Activated CD4-positive, alpha-beta memory T cell treated with anti-CD3 and anti-CD28 coated beads, Interleukin-2, amount 10 ng/mL, durations not matched to agents 7 days and 5 days (primary cell): ENCODE measurements at regions of chr20 and their contacts with region 1.

Region 1: DNA sequence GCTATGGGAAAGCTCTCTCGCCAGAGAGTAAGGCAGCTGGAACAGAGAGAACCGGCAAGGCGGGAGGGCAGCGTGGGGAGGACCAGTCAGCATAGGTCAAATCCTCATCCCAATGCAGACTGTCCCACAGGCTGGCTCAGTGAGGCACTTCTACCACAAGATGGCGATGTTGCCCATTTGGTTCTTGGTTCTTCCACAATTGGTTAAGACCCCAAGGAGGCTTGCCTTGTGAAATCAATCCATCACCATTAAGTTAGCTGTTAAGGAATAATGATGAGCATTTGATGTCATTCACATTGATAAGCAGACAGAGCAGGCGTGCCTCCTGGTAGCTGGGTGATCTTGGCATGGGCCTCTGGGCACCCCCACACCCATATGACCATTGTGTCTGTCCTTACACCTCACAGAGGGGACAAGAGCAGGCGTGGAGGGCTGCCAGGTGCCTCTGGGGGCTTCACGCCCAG is 2.4 kb downstream of the CSTL1 start:
- DNase-seq: peak; percentile 57
- H3K4me3 Mint-ChIP-seq: no peak overlapping the region
- H3K27ac Mint-ChIP-seq: no peak overlapping the region
- H3K4me1 Mint-ChIP-seq: no peaks in the 10 kb centered on the region
- H3K27me3 Mint-ChIP-seq: peaks cover 3% of the 10 kb centered on the region

Region 2: DNA sequence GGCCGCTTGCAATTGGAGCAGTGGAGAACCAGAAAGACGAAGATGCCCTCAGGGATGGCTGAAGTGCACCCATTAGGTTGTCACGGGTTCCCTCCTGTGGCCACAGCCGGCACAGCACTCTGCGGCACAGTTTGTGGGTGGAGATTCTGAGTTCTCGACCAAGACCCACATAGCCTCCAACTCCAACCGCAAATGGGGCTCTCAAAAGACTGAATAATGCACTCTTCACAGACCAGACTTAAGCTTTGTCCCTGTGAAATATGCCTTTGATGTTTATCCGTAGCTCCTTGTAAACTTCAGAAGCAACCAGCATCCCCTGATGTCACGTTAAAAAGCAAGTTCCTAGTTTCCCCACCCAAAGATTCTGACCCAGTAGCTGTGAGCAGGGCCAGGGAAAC is 164.8 kb after region 1 on chr20:
- CTCF ChIA-PET with region 1: interaction called, 11 read pairs
- POLR2A ChIA-PET with region 1: no interaction called
- DNase-seq: peak; percentile 67
- H3K4me3 Mint-ChIP-seq: no peak overlapping the region
- H3K27ac Mint-ChIP-seq: no peak overlapping the region
- H3K4me1 Mint-ChIP-seq: peaks cover 4% of the 10 kb centered on the region
- H3K27me3 Mint-ChIP-seq: no peaks in the 10 kb centered on the region